ENCODE measurements at regions of chr5 and their contacts with region 1.

Region 1: GRCh38 chr5:161851691-161852299 is 3.9 kb downstream of the GABRA1 start:
- DNase-seq: no peak
- ATAC-seq: no peak
- H3K4me3 Mint-ChIP-seq: no peak overlapping the region
- H3K27ac Mint-ChIP-seq: no peak overlapping the region
- H3K4me1 Mint-ChIP-seq: no peaks in the 10 kb centered on the region
- H3K27me3 Mint-ChIP-seq: peaks cover 16% of the 10 kb centered on the region
- CTCF ChIP-seq: no peak

Region 2: DNA sequence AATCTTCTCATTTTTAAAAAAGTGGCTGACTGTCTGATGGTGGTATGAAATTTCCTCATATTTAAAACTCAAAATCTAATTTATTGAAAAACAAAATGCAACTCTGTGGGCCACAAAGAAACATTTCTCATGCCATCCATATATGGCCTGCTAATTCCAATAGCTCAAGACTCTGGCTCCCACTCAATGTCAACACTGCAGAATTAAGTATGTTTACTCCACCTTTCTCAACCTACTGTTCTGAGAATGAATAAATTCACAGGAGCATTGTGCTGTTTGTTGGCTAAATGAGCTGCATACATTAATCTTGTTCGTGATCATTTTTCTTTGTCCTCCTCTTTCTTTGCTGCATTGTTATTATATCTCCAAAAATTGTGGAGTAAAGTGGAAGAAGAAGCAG is 136.3 kb after region 1 on chr5:
- CTCF ChIA-PET with region 1: no interaction called
- POLR2A ChIA-PET with region 1: no interaction called
- intact Hi-C with region 1: no loop called
- DNase-seq: no peak
- ATAC-seq: no peak
- H3K4me3 Mint-ChIP-seq: no peak overlapping the region
- H3K27ac Mint-ChIP-seq: no peak overlapping the region
- H3K4me1 Mint-ChIP-seq: no peaks in the 10 kb centered on the region
- H3K27me3 Mint-ChIP-seq: no peaks in the 10 kb centered on the region
- CTCF ChIP-seq: no peak

Region 3: DNA sequence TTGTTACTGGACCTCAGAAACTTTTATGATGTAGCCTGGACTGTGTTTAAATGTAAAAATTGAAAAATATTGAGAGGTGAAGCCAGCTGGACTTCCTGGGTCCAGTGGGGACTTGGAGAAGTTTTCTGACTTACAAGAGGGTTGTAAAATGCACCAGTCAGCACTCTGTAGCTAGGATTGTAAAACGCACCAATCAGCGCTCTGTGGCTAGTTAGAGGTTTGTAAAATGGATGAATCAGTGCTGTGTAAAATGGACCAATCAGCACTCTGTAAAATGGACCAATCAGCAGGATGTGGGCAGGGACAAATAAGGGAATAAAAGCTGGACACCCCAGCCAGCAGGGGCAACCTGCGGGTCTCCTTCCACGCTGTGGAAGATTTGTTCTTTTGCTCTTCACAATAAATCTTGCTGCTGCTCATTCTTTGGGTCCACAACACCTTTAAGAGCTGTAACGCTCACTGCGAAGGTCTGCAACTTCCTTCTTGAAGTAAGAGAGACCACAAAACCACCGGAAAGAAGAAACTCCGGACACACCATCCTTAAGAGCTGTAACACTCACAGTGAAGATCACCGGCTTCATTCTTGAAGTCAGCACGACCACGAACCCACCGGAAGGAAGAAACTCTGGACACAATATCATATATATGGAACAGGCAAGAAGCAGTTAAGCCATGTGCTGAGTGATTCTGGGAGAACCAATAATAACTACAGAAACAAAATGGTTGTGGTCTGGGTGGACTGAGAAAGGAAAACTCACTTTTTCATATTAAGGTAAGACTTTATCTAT is 417.1 kb after region 1 on chr5:
- CTCF ChIA-PET with region 1: no interaction called
- POLR2A ChIA-PET with region 1: no interaction called
- intact Hi-C with region 1: no loop called
- DNase-seq: no peak
- ATAC-seq: no peak
- H3K4me3 Mint-ChIP-seq: no peak overlapping the region
- H3K27ac Mint-ChIP-seq: no peak overlapping the region
- H3K4me1 Mint-ChIP-seq: no peaks in the 10 kb centered on the region
- H3K27me3 Mint-ChIP-seq: no peaks in the 10 kb centered on the region
- CTCF ChIP-seq: no peak

Region 4: DNA sequence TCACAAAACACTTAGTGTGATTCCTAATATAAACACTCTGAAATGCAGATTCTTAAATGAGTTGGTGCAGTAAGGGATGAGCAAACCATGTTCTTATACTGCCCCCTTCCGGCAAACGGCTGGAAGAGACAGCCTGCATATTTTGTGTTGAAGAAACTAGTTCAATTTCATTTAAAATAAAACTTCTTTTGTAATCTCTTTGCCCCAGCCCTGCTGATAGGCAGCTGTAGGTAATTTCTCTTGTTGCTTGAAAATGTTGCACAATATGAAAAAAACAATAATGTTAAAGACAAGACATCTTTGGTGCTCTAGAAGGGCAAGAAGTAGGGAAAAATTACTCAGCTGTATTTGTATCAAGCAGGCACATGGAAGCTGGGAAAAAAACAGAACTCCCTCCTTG is 1495.9 kb after region 1 on chr5:
- CTCF ChIA-PET with region 1: no interaction called
- POLR2A ChIA-PET with region 1: no interaction called
- intact Hi-C with region 1: loop called (anchors 5 kb)
- DNase-seq: no peak
- ATAC-seq: no peak
- H3K4me3 Mint-ChIP-seq: no peak overlapping the region
- H3K27ac Mint-ChIP-seq: no peak overlapping the region
- H3K4me1 Mint-ChIP-seq: no peaks in the 10 kb centered on the region
- H3K27me3 Mint-ChIP-seq: peaks cover 11% of the 10 kb centered on the region
- CTCF ChIP-seq: peak; percentile 84

Measured in activated B cell treated with CpG ODN at 0.5 μM for 24 hours (primary cell).